ENCODE measurements at regions of chr3 and their contacts with region 1.

Region 1: GRCh38 chr3:45037734-45038455 is 11.8 kb downstream of the CLEC3B start:
- DNase-seq: peak; percentile 88 to 93 (median 90)
- ATAC-seq: peak; percentile 57 to 85 (median 82)
- H3K4me3 ChIP-seq: peak overlapping the region in 3 of 12 donors; percentile 9 to 25 (median 11)
- H3K27ac ChIP-seq: no peak overlapping the region
- H3K4me1 ChIP-seq: peaks cover 0 to 62% (median 35%) of the 10 kb centered on the region in 12 donors
- H3K27me3 ChIP-seq: no peaks in the 10 kb centered on the region
- CTCF ChIP-seq: peak; percentile 77 to 94 (median 92)
- POLR2A ChIP-seq: no peak

Region 2: GRCh38 chr3:44535364-44535763 is 502.5 kb before region 1 on chr3:
- intact Hi-C with region 1: loop called in 2 of 10 experiments (anchors 5 to 10 kb)
- DNase-seq: no peak
- ATAC-seq: no peak
- H3K4me3 ChIP-seq: no peak overlapping the region
- H3K27ac ChIP-seq: no peak overlapping the region
- H3K4me1 ChIP-seq: no peaks in the 10 kb centered on the region
- H3K27me3 ChIP-seq: peaks cover 0 to 56% (median 6%) of the 10 kb centered on the region in 9 donors
- CTCF ChIP-seq: no peak
- POLR2A ChIP-seq: no peak

Region 3: GRCh38 chr3:44992555-44993470 is 45.1 kb before region 1 on chr3:
- intact Hi-C with region 1: loop called in 2 of 10 experiments (anchors 5 kb)
- DNase-seq: no peak
- ATAC-seq: no peak
- H3K4me3 ChIP-seq: no peak overlapping the region
- H3K27ac ChIP-seq: peak overlapping the region in 6 of 12 donors; percentile 15 to 37 (median 20)
- H3K4me1 ChIP-seq: peaks cover 9 to 61% (median 35%) of the 10 kb centered on the region in 12 donors
- H3K27me3 ChIP-seq: no peaks in the 10 kb centered on the region
- CTCF ChIP-seq: peak; percentile 46 to 71 (median 58)
- POLR2A ChIP-seq: no peak

Region 4: DNA sequence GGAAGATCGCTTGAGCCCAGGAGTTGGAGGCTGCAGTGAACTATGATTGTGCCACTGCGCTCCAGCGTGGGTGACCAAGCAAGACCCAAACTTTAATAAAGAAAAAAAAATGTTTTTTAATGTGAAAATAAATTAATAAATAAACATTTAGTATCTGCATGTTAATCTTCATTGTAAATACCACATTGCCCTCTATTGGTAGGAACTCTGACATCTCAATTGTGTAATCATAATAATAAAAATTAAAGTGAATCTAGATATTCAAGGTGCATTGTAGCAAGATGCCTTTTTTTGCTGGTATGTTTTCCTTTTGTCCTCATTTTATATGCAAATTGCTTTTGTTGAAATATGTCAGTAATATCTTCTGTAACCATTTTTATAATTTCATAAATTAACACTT is 461.6 kb after region 1 on chr3:
- intact Hi-C with region 1: loop called (anchors 2 to 5 kb)
- DNase-seq: no peak
- ATAC-seq: no peak
- H3K4me3 ChIP-seq: no peak overlapping the region
- H3K27ac ChIP-seq: no peak overlapping the region
- H3K4me1 ChIP-seq: peaks cover 0 to 9% (median 0%) of the 10 kb centered on the region in 12 donors
- H3K27me3 ChIP-seq: no peaks in the 10 kb centered on the region
- CTCF ChIP-seq: peak in 11 of 12 donors; percentile 23 to 56 (median 39)
- POLR2A ChIP-seq: no peak

Region 5: GRCh38 chr3:45656575-45657363 is 618.9 kb after region 1 on chr3:
- intact Hi-C with region 1: loop called in 4 of 10 experiments (anchors 10 kb)
- DNase-seq: peak; percentile 84 to 94 (median 93)
- ATAC-seq: peak; percentile 75 to 92 (median 88)
- H3K4me3 ChIP-seq: no peak overlapping the region
- H3K27ac ChIP-seq: peak overlapping the region in 2 of 12 donors; percentile 14 to 16
- H3K4me1 ChIP-seq: peaks cover 0 to 58% (median 41%) of the 10 kb centered on the region in 12 donors
- H3K27me3 ChIP-seq: no peaks in the 10 kb centered on the region
- CTCF ChIP-seq: peak; percentile 89 to 97 (median 93)
- POLR2A ChIP-seq: no peak

Measured in heart left ventricle (tissue), 16 donors.